Heart left ventricle (tissue), 16 donors: ENCODE measurements at regions of chr11 and their contacts with region 1.

Region 1: DNA sequence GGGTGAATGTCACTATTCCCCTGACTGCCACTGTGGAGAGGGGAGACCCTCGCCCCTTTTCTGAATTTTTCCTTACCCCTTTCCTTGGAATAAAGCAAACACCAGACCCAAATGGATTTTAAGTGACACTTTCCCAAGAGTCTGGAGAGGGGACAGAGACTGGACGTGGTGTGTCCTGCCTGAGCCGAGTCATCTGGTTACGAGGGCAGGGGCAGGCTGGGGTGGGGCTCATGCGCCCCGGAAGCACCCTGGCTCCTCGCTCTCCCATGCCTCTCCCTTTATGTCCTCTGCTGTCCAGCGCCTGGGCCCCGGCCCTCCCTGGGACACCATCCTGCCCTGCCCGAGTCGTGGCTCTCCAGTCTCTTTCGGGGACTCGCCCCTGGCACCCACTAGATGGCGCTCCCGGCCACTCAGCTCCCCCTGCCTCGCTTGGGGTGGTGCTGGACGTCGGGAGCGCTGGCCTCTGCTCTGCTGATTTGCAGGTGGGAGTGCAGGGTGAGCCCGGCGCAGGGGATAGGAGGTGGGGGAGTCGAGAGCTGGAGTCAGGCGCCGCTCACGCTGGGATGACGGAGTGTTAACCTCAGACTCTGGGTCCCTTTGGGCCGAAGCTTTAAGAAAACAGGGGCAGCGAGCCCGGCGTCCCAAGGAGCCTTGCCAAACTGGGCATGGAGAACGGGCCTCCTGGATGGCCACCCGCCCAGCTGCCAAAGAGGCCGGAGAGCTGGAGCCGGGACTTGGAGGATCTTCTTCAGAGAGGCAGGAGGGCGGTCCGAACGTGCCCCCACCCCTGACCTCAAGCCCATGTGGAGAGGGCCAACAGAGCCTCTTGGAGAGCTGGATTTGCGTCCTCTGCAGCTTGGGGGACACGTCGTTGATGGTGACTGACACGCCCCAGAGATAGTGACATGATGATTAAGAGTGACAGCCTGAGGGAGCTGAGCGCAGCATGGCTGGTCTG is 89.9 kb downstream of the RPS6KA4 start:
- DNase-seq: peak; percentile 79 to 93 (median 83)
- ATAC-seq: peak; percentile 87 to 98 (median 96)
- H3K4me3 ChIP-seq: peak overlapping the region in 10 of 12 donors; percentile 10 to 51 (median 36)
- H3K27ac ChIP-seq: peak overlapping the region in 6 of 12 donors; percentile 12 to 92 (median 27)
- H3K4me1 ChIP-seq: peaks cover 0 to 29% (median 14%) of the 10 kb centered on the region in 12 donors
- H3K27me3 ChIP-seq: peaks cover 0 to 21% (median 0%) of the 10 kb centered on the region in 9 donors
- CTCF ChIP-seq: peak; percentile 76 to 91 (median 84)
- POLR2A ChIP-seq: no peak

Region 2: DNA sequence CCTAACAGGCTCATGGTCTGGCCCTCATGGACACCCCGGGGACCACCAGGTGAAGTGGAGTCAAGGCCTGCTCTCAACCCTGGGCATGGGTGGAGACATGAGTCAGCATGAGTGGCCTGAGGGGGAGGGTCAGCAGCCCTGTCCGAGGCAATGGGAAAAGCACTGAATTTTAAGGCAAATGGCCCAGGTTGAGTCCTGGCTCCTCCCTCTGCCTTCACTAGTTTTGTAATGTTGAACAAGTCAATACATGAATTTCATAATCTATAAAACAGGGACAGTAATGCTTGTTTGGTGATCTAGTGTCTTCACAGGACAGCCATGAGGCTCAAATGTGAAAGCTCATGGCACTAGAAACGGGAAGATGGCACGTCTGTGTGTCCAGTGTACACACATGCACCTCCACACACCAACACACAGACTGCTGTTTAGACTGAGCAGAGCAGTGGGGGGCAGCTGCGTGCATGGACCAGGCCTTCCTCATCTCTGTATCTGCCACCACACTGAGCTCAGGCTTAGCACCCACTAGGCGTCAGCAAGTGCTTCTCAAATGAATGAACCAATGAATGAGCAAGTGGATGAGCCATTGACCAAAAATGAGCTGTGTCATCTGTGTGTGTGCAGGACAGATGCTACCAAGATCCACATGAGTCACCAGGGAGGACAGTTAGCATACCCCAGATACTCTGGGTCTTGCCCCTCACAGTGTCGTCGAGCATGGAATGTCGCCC is 210.7 kb after region 1 on chr11:
- intact Hi-C with region 1: loop called in 7 of 10 experiments (anchors 5 kb)
- DNase-seq: no peak
- ATAC-seq: no peak
- H3K4me3 ChIP-seq: no peak overlapping the region
- H3K27ac ChIP-seq: no peak overlapping the region
- H3K4me1 ChIP-seq: peaks cover 0 to 37% (median 3%) of the 10 kb centered on the region in 12 donors
- H3K27me3 ChIP-seq: peaks cover 0 to 2% (median 0%) of the 10 kb centered on the region in 9 donors
- CTCF ChIP-seq: no peak
- POLR2A ChIP-seq: no peak